ENCODE measurements at regions of chr6 and their contacts with region 1.

Region 1: DNA sequence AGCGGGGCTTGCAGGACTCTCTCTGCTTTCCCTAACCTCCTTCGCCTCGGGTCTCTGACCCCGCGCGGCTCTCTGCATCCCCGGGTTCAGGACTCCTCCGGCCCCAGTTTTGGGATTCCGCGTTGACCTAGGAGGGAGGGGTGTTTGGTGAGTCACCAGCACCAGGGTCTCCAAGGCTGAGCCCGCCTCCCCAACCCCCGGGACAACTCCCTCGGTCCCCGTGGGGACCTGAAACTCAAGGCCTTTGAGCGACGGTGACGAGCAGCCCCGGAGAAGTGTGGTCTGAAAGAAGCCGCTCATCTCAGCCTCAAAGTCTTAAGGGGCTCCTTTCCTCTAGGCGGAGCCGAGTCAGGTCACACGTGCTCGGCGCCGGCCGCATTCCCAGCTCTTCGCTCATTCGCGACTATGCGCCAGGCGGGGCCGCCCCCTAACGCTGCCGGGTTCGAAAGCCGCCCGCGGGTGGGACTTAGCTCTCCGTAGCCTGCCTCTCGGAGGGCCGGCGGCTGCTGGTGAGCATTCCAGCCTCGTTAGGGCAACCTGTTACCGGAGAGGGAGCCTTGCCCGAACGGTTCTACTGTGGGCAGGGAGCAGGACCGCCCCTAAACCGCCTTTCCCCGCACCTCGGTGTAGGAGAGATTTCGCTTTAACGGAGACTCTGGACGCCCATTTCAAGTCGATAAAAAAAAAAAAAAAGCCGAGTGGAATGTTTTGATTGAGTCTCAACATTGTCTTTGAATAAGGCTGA is 3.0 kb upstream of the PRDM13 start:
- DNase-seq: peak; percentile 84
- ATAC-seq: peak; percentile 62
- H3K4me3 Mint-ChIP-seq: peak overlapping the region; percentile 62
- H3K27ac Mint-ChIP-seq: no peak overlapping the region
- H3K4me1 Mint-ChIP-seq: peaks cover 51% of the 10 kb centered on the region
- H3K27me3 Mint-ChIP-seq: peaks cover 100% of the 10 kb centered on the region
- CTCF ChIP-seq: no peak

Region 2: DNA sequence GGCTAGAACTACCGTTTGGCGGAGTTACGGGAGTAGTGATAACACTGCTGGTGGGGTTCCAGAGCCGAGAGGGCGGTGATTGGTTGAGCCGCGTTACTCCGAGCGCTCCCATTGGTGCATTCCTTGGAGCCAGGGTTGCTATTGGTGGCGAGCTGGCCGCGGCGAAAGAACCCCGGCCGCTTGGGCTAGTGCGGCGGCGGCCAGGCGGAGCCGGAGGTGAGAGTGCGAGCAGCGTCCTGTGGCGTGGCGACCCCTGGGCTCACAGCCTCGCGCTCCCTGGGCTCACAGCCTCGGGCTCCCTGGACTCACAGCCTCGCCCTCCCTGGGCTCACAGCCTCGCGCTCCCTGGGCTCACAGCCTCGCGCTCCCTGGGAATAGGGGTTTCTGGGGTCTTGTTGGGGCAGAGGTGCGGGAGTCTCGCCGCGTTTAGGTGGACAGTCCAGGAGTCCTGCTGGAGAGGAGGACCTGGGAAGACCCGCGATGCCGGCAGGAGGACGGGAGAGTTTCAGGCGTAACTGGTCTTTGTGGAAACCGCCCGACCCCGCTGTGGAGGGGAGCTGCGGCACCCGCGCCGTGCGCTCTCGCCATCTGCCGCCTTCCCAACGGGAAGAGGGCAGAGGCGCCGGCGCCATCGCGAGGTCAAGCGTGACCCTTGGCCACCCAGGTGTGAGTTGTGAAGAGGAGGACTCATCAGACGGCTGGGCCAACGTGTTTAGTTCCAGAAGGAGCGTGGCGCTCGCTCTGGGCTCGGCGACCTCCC is 15.2 kb after region 1 on chr6:
- CTCF ChIA-PET with region 1: interaction called, 10 read pairs
- POLR2A ChIA-PET with region 1: no interaction called
- DNase-seq: peak; percentile 84
- ATAC-seq: peak; percentile 83
- H3K4me3 Mint-ChIP-seq: peak overlapping the region; percentile 69
- H3K27ac Mint-ChIP-seq: no peak overlapping the region
- H3K4me1 Mint-ChIP-seq: peaks cover 7% of the 10 kb centered on the region
- H3K27me3 Mint-ChIP-seq: peaks cover 100% of the 10 kb centered on the region
- CTCF ChIP-seq: no peak

Region 3: DNA sequence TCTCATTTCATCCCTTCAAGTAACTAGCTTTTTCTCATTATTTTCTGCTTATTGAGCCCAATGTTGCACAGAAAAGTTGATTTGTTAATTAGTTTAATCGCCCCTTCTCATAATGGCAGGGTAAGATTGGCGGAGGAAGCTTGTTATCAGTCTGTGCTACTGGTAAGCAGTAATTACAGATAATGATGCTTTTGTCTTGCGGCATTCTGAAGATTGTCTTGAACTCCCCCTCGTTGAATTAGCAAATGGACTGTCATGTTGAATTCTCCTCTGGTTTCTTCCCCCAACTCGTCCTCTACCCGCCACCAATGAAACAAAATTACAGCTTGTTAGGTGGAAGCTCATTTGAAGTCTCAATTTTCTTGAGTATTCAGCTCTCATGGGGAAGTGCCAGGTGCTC is 42.4 kb after region 1 on chr6:
- CTCF ChIA-PET with region 1: no interaction called
- POLR2A ChIA-PET with region 1: no interaction called
- DNase-seq: no peak
- ATAC-seq: no peak
- H3K4me3 Mint-ChIP-seq: no peak overlapping the region
- H3K27ac Mint-ChIP-seq: no peak overlapping the region
- H3K4me1 Mint-ChIP-seq: no peaks in the 10 kb centered on the region
- H3K27me3 Mint-ChIP-seq: peaks cover 8% of the 10 kb centered on the region
- CTCF ChIP-seq: no peak

Measured in WTC11 (cell line).